GM12878 (cell line): ENCODE measurements at regions of chr10 and their contacts with region 1.

Region 1: DNA sequence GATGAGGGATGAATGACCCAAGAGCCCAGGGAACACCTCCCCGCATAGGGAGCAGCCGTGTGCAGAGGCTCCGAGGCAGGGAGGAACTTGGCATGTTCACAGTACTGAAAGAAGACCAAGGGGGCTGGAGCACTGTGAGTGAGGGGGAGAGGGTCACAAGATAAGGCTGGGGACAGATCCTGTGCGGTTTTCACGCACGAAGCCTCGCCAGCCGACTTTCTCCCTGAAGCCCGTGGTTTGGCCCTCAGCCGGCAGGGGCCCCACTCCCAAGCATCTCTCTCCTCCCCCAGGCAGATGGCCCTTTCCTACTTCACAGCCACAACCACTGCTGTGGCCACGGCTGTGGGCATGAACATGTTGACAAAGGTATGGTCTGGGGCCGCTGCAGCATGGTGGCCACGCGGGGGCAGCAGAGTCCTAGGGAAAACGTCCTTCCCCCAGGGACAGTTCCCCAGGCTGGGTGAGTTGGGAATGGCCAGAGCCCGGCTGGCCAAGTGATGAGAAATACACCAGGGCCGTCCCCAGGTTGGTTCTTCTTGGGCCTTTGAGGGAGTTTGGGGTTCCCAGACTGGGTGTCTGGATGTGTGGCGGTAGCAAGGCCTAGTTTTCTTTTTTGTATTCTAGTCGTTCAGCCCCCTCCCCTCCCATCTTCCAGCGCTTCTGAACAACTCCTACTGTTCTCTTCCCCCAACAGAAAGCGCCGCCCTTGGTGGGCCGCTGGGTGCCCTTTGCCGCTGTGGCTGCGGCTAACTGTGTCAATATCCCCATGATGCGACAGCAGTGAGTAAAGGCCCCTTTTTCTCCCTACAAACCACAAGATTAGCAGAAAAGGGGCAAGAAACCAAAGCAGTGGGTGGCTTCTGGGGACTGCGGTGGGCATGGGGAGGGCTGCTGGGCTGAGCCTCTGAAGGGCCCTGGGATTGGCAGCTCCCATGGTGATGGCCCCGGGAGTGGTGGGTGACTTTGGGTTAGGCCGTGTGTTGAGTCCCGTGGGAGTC is 14.4 kb upstream of the WBP1L start:
- DNase-seq: no peak
- ATAC-seq: peak; percentile 99
- H3K4me3 ChIP-seq: no peak overlapping the region
- H3K27ac ChIP-seq: no peak overlapping the region
- H3K4me1 ChIP-seq: no peaks in the 10 kb centered on the region
- H3K27me3 ChIP-seq: no peaks in the 10 kb centered on the region
- CTCF ChIP-seq: peak; percentile 87 to 92 (median 88)
- EP300 ChIP-seq: no peak
- POLR2A ChIP-seq: no peak
- RAD21 ChIP-seq: peak; percentile 78

Region 2: DNA sequence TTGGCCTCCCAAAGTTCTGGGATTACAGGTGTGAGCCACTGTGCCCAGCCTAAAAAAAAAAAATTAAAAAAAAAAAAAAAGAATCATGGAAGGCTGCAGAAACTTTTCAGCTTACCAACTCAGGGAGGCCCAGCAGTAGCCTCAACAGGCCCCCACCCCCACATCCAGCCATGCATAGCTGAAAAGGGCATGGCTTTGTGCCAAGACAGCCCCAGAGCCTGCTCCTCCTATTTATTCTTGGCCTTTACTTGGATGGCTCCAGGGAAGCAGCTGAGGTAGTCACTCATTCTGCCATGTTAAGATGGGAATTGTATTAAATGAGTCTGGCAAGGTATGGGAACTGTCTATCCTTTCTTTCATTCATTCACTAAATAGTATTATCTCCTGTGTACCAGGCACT is 175.0 kb after region 1 on chr10:
- CTCF ChIA-PET with region 1: interaction called, 13 read pairs
- POLR2A ChIA-PET with region 1: interaction called, 4 read pairs
- RAD21 ChIA-PET with region 1: interaction called, 10 read pairs
- SMC1A ChIA-PET with region 1: interaction called, 13 read pairs
- in situ Hi-C with region 1: loop called (anchors 5 kb)
- intact Hi-C with region 1: loop called (anchors 1 kb)
- DNase-seq: no peak
- ATAC-seq: no peak
- H3K4me3 ChIP-seq: no peak overlapping the region
- H3K27ac ChIP-seq: no peak overlapping the region
- H3K4me1 ChIP-seq: no peaks in the 10 kb centered on the region
- H3K27me3 ChIP-seq: no peaks in the 10 kb centered on the region
- CTCF ChIP-seq: no peak
- EP300 ChIP-seq: no peak
- POLR2A ChIP-seq: no peak
- RAD21 ChIP-seq: no peak

Region 3: GRCh38 chr10:103069453-103070331 is 340.4 kb after region 1 on chr10:
- CTCF ChIA-PET with region 1: no interaction called
- POLR2A ChIA-PET with region 1: no interaction called
- RAD21 ChIA-PET with region 1: no interaction called
- SMC1A ChIA-PET with region 1: no interaction called
- in situ Hi-C with region 1: no loop called
- intact Hi-C with region 1: loop called (anchors 10 kb)
- DNase-seq: peak; percentile 46
- ATAC-seq: peak; percentile 87
- H3K4me3 ChIP-seq: 0 out of 2 replicates have a peak overlapping the region, but pooled peaks have one; percentile 2
- H3K27ac ChIP-seq: peak overlapping the region; percentile 73
- H3K4me1 ChIP-seq: peaks cover 37% of the 10 kb centered on the region
- H3K27me3 ChIP-seq: no peaks in the 10 kb centered on the region
- CTCF ChIP-seq: peak; percentile 69 to 82 (median 70)
- EP300 ChIP-seq: no peak
- POLR2A ChIP-seq: no peak
- RAD21 ChIP-seq: peak; percentile 88